Activated CD8-positive, alpha-beta T cell treated with anti-CD3 and anti-CD28 coated beads for 36 hours (primary cell): ENCODE measurements at regions of chr6 and their contacts with region 1.

Region 1: DNA sequence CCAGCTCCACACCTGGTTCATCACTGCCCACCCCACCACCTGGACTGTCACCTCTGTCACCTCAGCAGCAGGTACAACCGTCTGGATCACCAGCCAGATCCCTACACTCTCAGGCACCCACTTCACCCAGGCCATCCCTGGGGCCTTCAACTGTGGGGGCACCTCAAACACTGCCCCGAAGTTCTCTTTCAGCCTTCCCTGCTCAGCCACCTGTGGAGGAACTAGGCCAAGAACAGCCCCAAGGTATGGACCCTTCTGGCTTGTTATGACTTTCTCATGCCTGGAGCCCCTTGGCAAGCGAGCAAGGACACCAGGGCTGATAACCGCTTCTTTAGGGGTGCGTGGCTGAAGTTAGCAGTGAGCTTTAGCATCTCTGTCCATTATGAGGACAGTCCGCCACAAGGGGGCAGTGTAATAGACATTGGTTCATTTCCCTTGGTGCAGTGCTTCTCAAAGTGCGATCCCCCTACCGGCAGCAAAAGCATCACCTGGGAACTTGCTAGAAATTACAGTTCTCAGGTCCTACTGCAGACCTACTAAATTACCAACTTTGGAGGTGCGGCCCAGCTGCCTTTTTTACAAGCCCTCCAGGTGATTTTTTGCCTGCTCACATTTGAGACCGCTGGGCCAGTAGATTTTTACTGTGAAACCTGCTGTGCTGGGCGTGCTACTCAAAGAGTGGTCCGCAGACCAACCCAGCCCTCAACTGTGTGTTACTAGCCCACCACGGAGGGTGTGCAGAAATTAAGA is 32.5 kb downstream of the PNPLA1 start:
- DNase-seq: peak; percentile 98
- ATAC-seq: peak; percentile 98
- H3K4me3 Mint-ChIP-seq: no peak overlapping the region
- H3K27ac Mint-ChIP-seq: no peak overlapping the region
- H3K4me1 Mint-ChIP-seq: no peaks in the 10 kb centered on the region
- H3K27me3 Mint-ChIP-seq: peaks cover 8% of the 10 kb centered on the region
- CTCF ChIP-seq: peak; percentile 99

Region 2: DNA sequence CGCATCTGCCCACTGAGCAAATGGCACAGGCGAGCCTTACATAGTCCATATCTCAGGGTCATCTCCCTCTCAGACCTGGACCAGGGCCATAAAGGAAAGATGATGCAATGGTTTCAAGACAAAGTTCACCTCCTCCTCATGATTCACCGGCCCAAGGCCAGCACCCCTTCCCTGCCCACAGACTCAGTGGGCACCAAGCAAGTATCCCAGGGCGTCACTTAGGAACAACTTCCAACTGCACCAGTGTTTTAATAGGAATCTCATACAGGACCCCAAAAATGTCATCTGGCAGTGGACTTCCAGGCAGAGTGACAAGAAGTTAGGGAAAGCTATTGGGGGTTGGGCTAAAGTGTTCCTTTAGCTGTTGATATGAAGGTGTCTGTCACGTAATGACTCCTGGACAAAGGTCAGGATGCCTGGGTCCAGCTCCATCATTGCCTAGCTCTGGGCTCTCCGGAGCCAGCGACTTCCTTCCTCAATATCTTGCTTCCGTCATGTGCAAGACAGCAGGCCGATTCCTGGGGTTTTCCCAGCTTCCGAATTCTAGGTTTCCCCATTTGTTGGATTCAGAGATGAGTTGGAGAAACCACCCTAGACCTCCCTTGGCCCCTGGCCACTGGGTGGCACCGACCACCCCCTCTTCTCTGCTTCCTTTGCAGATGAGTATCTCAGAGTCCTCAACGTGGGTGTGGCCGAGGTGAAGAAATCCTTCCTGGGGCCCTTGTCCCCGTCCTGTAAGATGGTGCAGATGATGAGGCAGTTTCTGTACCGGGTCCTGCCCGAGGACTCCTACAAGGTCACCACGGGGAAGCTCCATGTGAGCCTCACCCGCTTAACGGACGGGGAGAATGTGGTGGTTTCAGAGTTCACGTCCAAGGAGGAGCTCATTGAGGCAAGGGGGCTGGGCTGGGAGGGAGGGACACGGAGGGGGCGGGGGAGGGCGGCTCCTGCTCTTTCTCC is 11.5 kb before region 1 on chr6:
- CTCF ChIA-PET with region 1: interaction called, 25 read pairs
- POLR2A ChIA-PET with region 1: no interaction called
- intact Hi-C with region 1: no loop called
- DNase-seq: peak; percentile 6
- ATAC-seq: no peak
- H3K4me3 Mint-ChIP-seq: no peak overlapping the region
- H3K27ac Mint-ChIP-seq: no peak overlapping the region
- H3K4me1 Mint-ChIP-seq: peaks cover 7% of the 10 kb centered on the region
- H3K27me3 Mint-ChIP-seq: peaks cover 4% of the 10 kb centered on the region
- CTCF ChIP-seq: no peak

Region 3: DNA sequence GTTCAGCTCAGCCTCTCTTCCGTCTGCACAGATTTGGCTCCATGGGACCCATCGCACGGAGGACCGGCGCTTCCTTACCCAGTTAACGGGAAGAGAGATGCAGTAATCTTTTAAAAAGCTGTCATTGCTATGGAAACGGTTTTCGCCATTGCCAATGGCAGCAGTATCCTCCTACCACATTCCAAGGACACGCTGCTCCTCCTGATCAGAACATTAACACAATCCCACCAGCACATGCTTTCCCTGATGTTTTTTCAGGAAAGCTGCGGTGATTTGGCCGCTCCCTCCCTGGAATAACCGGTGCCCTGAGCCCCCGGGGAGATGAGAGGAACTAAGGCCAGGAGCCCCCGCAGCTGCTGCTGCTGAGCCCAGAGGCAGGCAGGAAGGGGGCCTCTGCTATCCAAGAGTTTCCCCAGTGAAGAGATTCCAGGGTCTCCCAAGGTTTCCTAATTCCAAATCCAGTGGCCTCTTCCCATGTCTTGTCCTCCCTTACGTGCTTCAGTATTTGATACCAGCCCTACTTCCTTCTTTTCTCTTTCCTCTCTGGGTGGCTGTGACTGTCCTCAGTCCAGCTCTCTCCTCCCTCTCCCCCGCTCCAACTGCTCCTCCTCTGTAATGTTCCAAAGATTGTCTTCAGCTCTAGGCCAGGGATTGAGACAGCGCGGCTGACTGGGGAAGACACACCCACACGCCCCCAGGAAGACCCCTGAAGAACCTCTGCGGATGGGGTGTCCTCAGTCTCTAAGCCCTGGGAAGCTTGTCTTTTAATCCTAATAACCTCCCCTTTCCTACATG is 31.7 kb after region 1 on chr6:
- CTCF ChIA-PET with region 1: interaction called, 16 read pairs
- POLR2A ChIA-PET with region 1: no interaction called
- intact Hi-C with region 1: no loop called
- DNase-seq: no peak
- ATAC-seq: no peak
- H3K4me3 Mint-ChIP-seq: no peak overlapping the region
- H3K27ac Mint-ChIP-seq: no peak overlapping the region
- H3K4me1 Mint-ChIP-seq: peaks cover 12% of the 10 kb centered on the region
- H3K27me3 Mint-ChIP-seq: peaks cover 20% of the 10 kb centered on the region
- CTCF ChIP-seq: no peak

Region 4: DNA sequence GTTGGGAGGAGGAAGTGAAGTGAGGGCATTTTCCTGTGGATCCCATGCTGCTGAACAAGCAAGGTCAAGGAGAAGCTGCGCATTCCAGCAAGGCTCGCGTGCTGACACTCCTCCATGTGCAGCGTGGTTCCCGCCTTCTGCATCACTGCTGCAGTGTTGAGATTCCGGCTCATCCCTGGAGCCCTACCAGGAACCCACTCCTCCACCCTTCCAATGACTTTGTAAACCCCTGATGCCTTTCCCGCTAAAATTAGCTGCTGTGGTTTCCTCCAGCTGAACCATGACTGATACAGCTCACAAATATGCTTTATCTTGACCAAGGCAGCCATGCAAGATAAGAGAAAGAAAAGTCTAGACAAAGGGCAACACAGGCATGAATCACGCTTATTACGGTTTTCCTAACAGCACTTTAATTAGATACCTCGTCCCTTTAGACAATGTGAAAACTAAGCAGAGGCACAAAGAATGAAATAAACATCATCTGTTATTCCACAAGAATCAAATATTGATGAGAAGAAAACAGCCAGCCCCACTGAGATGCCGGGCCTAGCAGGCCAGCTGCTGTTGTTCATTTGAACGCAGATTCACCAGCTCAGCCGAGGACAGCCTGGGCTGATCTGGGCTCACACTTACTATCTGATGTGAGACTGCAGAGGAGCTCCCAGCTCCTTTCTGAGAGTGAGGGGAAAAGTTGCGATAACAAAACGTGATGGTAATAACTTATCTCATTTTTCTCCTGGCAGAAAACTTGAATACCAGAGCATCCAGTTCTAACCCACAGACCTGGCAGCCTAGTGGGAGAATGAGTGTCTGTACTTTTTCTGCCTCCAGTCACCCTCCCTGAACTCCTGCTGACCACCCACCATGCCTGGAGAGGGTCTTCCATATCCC is 48.5 kb after region 1 on chr6:
- CTCF ChIA-PET with region 1: interaction called, 21 read pairs
- POLR2A ChIA-PET with region 1: no interaction called
- intact Hi-C with region 1: no loop called
- DNase-seq: no peak
- ATAC-seq: no peak
- H3K4me3 Mint-ChIP-seq: no peak overlapping the region
- H3K27ac Mint-ChIP-seq: no peak overlapping the region
- H3K4me1 Mint-ChIP-seq: peaks cover 5% of the 10 kb centered on the region
- H3K27me3 Mint-ChIP-seq: peaks cover 2% of the 10 kb centered on the region
- CTCF ChIP-seq: no peak

Region 5: GRCh38 chr6:36423101-36423824 is 120.9 kb after region 1 on chr6:
- CTCF ChIA-PET with region 1: no interaction called
- POLR2A ChIA-PET with region 1: no interaction called
- intact Hi-C with region 1: no loop called
- DNase-seq: peak; percentile 99
- ATAC-seq: peak; percentile 96
- H3K4me3 Mint-ChIP-seq: peak overlapping the region; percentile 77
- H3K27ac Mint-ChIP-seq: peak overlapping the region; percentile 89
- H3K4me1 Mint-ChIP-seq: peaks cover 11% of the 10 kb centered on the region
- H3K27me3 Mint-ChIP-seq: no peaks in the 10 kb centered on the region
- CTCF ChIP-seq: peak; percentile 67